CD14-positive monocyte (primary cell): ENCODE measurements at regions of chr1 and their contacts with region 1.

Region 1: GRCh38 chr1:33086384-33086850 is 5.5 kb downstream of the AZIN2 start:
- DNase-seq: peak; percentile 51 to 68 (median 67)
- H3K4me3 ChIP-seq: peak overlapping the region in 1 of 3 experiments; percentile 22
- H3K4me3 Mint-ChIP-seq: peak overlapping the region; percentile 39 to 66
- H3K27ac ChIP-seq: no peak overlapping the region
- H3K27ac Mint-ChIP-seq: peak overlapping the region in 1 of 7 donors; percentile 74
- H3K4me1 ChIP-seq: peaks cover 21 to 27% of the 10 kb centered on the region in 2 donors
- H3K4me1 Mint-ChIP-seq: peaks cover 29% of the 10 kb centered on the region
- H3K27me3 ChIP-seq: peaks cover 15 to 22% of the 10 kb centered on the region in 2 donors
- H3K27me3 Mint-ChIP-seq: peaks cover 18 to 31% (median 19%) of the 10 kb centered on the region in 3 donors
- CTCF ChIP-seq: peak; percentile 82

Region 2: DNA sequence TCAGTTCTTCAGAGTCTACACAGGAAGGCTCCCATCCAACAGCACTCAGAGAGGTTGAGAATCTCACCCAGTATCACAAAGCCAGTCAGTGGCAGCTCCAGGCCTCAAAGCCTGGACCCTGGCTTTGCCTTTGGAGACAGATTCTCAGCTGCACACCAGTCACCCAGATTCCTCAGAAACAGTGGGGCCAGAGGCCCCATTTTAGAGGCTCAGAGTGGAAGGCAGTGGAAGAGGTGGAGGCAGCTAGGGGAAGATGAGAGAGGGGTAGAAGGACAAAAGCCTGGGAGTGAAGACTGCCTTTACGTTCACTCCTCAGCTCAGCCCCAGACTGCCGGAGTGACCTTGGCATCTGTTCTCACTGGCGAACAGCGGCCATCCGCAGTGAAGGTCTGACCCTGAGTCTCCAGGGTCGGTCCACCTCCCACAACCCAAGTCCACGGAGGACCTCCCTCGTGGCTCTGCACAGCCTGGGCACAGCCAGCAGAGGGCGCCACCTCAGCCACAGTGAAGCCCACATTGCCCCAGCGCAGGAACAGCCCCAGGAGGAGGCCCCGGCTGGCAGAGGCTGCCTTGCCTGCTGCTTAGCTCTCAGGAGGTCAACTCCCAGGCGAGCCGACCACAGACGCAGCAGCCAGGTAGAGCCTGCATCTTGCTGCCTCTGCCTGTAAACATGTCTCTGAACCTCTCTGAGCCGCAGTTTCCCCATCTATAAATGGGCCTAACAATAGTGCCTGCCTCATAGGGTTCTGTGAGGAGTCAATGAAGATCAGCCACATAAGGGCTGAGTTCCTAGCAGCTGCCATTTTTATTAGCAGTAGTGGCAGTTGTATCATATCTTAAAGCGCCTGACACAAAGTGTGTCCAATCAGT is 209.8 kb before region 1 on chr1:
- intact Hi-C with region 1: loop called (anchors 2 to 5 kb)
- DNase-seq: peak; percentile 47 to 65 (median 53)
- H3K4me3 ChIP-seq: no peak overlapping the region
- H3K4me3 Mint-ChIP-seq: no peak overlapping the region
- H3K27ac ChIP-seq: no peak overlapping the region
- H3K27ac Mint-ChIP-seq: peak overlapping the region in 1 of 7 donors; percentile 62
- H3K4me1 ChIP-seq: no peaks in the 10 kb centered on the region
- H3K4me1 Mint-ChIP-seq: peaks cover 5% of the 10 kb centered on the region
- H3K27me3 ChIP-seq: peaks cover 6 to 35% of the 10 kb centered on the region in 2 donors
- H3K27me3 Mint-ChIP-seq: peaks cover 27 to 46% (median 44%) of the 10 kb centered on the region in 3 donors
- CTCF ChIP-seq: peak; percentile 96

Region 3: DNA sequence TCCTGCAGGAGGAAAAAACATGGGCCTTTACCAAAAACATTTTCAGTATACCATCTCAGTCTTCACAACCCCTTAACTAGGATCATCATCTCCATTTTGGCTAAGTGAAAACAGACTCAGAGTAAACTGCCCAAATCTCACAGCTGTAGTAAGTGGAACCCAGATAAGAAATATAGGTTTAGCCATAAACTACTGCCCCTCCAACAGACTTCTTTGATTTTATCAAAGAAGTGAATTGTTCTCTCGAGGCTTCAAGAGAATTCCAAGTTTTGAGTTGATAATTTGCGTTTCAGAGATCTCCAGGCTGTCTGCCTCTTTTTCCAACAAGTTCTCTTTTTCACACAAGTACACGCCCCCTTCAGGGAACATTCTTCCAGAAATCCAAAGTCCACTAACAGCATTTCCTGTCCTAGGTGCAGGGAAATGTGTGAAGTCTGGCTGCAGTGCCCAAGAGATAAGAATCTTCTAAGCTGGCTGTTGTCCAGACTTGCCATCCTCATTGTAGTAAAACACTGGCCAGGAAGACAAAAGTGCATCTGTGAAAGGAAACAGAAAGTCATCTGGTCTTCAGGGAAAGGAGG is 152.6 kb before region 1 on chr1:
- intact Hi-C with region 1: loop called (anchors 2 to 10 kb)
- DNase-seq: no peak
- H3K4me3 ChIP-seq: no peak overlapping the region
- H3K4me3 Mint-ChIP-seq: no peak overlapping the region
- H3K27ac ChIP-seq: no peak overlapping the region
- H3K27ac Mint-ChIP-seq: peak overlapping the region in 3 of 7 donors; percentile 0 to 68 (median 11)
- H3K4me1 ChIP-seq: peaks cover 0 to under 1% of the 10 kb centered on the region in 2 donors
- H3K4me1 Mint-ChIP-seq: peaks cover 7% of the 10 kb centered on the region
- H3K27me3 ChIP-seq: no peaks in the 10 kb centered on the region
- H3K27me3 Mint-ChIP-seq: peaks cover 0 to 2% (median 0%) of the 10 kb centered on the region in 3 donors
- CTCF ChIP-seq: peak; percentile 42

Region 4: GRCh38 chr1:34419663-34420136 is 1333.3 kb after region 1 on chr1:
- intact Hi-C with region 1: no loop called
- DNase-seq: no peak
- H3K4me3 ChIP-seq: no peak overlapping the region
- H3K4me3 Mint-ChIP-seq: no peak overlapping the region
- H3K27ac ChIP-seq: no peak overlapping the region
- H3K27ac Mint-ChIP-seq: no peak overlapping the region
- H3K4me1 ChIP-seq: no peaks in the 10 kb centered on the region
- H3K4me1 Mint-ChIP-seq: no peaks in the 10 kb centered on the region
- H3K27me3 ChIP-seq: no peaks in the 10 kb centered on the region
- H3K27me3 Mint-ChIP-seq: peaks cover 2 to 8% (median 4%) of the 10 kb centered on the region in 3 donors
- CTCF ChIP-seq: no peak